ENCODE measurements at regions of chr12 and their contacts with region 1.

Region 1: DNA sequence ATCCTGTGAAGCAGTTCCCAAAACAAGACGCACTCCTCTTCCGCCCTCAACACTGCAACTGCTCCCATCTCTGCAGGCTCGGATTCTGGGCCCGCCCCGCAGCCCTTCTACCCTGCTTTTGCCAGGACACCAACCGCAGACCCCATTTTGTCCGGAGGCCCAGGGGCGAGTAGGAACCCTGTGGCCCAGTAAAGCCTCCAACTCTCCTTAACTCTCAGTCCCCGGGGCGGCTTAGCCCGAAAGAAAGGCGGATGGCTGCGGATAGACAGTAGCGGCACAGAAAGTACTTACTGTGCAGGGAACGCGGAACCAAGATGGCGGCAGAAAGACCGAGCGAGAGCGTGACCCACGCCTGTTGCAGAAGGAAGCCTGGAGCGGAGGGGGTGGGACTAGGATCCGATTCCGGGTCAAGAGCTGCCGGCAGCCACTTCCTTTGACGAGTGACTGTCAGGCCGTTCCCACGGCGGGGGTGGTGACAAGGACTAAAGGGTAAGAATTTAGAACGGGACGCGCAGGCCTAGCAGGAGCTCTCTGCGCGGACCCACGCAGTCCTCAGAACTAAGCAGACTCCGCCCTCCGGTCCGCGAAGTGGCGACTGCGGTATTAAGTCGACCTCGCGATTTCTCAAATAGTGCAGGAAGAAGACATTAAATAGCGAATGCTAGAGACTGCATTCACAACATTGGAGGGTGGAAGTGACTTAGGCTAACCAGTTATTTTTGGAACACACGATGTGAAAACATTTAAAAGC is at the start of gene NACA:
- DNase-seq: peak; percentile 98
- ATAC-seq: peak; percentile 95
- H3K4me3 ChIP-seq: peak within 1 kb of the TSS; percentile 76 to 99 (median 90)
- H3K4me3 Mint-ChIP-seq: peak within 1 kb of the TSS; percentile 95
- H3K27ac ChIP-seq: peak within 1 kb of the TSS; percentile 81 to 92
- H3K27ac Mint-ChIP-seq: peak within 1 kb of the TSS; percentile 95
- H3K4me1 ChIP-seq: peaks cover 47 to 49% of the 10 kb centered on the region in 2 donors
- H3K4me1 Mint-ChIP-seq: peaks cover 59% of the 10 kb centered on the region
- H3K27me3 ChIP-seq: no peaks in the 10 kb centered on the region
- H3K27me3 Mint-ChIP-seq: no peaks in the 10 kb centered on the region
- CTCF ChIP-seq: no peak
- total RNA-seq, gene NACA: 993 and 1,076 TPM in 2 replicates

Region 2: GRCh38 chr12:56645717-56646446 is 79.3 kb before region 1 on chr12 and contains the start of gene ATP5F1B:
- CTCF ChIA-PET with region 1: no interaction called
- POLR2A ChIA-PET with region 1: no interaction called
- intact Hi-C with region 1: loop called (anchors 1 kb)
- DNase-seq: peak; percentile 97
- ATAC-seq: peak; percentile 97
- H3K4me3 ChIP-seq: peak within 1 kb of the TSS; percentile 86 to 100 (median 94)
- H3K4me3 Mint-ChIP-seq: peak within 1 kb of the TSS; percentile 79
- H3K27ac ChIP-seq: peak within 1 kb of the TSS; percentile 85 to 91
- H3K27ac Mint-ChIP-seq: peak within 1 kb of the TSS; percentile 97
- H3K4me1 ChIP-seq: peaks cover 21 to 22% of the 10 kb centered on the region in 2 donors
- H3K4me1 Mint-ChIP-seq: peaks cover 29% of the 10 kb centered on the region
- H3K27me3 ChIP-seq: no peaks in the 10 kb centered on the region
- H3K27me3 Mint-ChIP-seq: no peaks in the 10 kb centered on the region
- CTCF ChIP-seq: no peak
- total RNA-seq, gene ATP5F1B: 217 and 230 TPM in 2 replicates

Region 3: GRCh38 chr12:56775638-56776037 is 50.5 kb after region 1 on chr12:
- CTCF ChIA-PET with region 1: no interaction called
- POLR2A ChIA-PET with region 1: no interaction called
- intact Hi-C with region 1: no loop called
- DNase-seq: peak; percentile 52
- ATAC-seq: no peak
- H3K4me3 ChIP-seq: no peak overlapping the region
- H3K4me3 Mint-ChIP-seq: no peak overlapping the region
- H3K27ac ChIP-seq: no peak overlapping the region
- H3K27ac Mint-ChIP-seq: peak overlapping the region; percentile 37
- H3K4me1 ChIP-seq: peaks cover 3 to 4% of the 10 kb centered on the region in 2 donors
- H3K4me1 Mint-ChIP-seq: peaks cover 12% of the 10 kb centered on the region
- H3K27me3 ChIP-seq: no peaks in the 10 kb centered on the region
- H3K27me3 Mint-ChIP-seq: no peaks in the 10 kb centered on the region
- CTCF ChIP-seq: no peak

Measured in B cell (primary cell).